A673 (cell line): ENCODE measurements at regions of chr15 and their contacts with region 1.

Region 1: GRCh38 chr15:83248151-83249029 is 36.1 kb downstream of the BNC1 start:
- DNase-seq: peak; percentile 73
- H3K4me3 ChIP-seq: no peak overlapping the region
- H3K27ac ChIP-seq: no peak overlapping the region
- H3K4me1 ChIP-seq: no peaks in the 10 kb centered on the region
- H3K27me3 ChIP-seq: peaks cover 6% of the 10 kb centered on the region
- CTCF ChIP-seq: peak; percentile 90

Region 2: GRCh38 chr15:83039206-83039605 is 209.2 kb before region 1 on chr15:
- CTCF ChIA-PET with region 1: no interaction called
- POLR2A ChIA-PET with region 1: no interaction called
- intact Hi-C with region 1: no loop called
- DNase-seq: no peak
- H3K4me3 ChIP-seq: no peak overlapping the region
- H3K27ac ChIP-seq: no peak overlapping the region
- H3K4me1 ChIP-seq: no peaks in the 10 kb centered on the region
- H3K27me3 ChIP-seq: no peaks in the 10 kb centered on the region
- CTCF ChIP-seq: no peak

Region 3: DNA sequence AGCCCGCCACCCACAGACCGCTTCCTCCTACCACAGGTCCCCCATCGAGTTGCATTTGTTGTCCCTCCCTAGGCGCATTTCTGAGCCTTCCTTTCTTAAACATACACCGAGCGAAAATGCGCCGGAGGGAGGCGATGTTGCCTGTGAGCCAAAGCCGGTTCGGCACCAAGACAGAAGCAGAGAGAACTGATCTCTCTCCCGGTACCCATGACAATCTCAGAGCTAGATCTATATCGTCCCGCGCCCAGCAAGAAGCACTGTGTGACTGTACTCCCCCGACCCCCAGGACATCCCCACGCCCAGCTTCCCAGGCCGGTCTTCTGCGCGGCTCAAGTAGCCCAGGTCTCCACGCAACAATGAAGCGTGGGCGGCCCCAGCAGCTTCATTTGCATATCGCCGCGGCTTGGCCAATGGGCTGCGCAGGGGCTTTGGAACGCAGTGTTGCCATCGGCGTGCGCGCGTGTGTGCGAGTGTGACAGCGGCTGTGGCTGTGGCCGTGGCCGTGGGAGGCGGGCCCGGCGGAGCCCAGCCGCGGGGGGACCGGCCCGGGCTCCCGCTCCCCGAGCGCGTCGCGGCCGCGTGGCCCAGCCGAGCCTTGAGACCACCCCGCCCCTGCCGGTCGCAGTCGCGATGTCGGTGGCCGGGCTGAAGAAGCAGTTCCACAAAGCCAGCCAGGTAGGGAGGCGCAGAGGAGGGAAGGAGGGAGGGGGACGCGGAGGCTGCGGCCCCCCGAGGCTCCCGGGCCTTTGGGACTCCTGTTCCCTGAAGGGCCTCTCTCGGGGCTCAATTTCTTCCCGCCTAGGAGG is 198.7 kb after region 1 on chr15 and contains the start of gene SH3GL3:
- CTCF ChIA-PET with region 1: interaction called, 13 read pairs
- POLR2A ChIA-PET with region 1: no interaction called
- intact Hi-C with region 1: no loop called
- DNase-seq: peak; percentile 93
- H3K4me3 ChIP-seq: peak within 1 kb of the TSS; percentile 63
- H3K27ac ChIP-seq: peak within 1 kb of the TSS; percentile 54
- H3K4me1 ChIP-seq: peaks cover 4% of the 10 kb centered on the region
- H3K27me3 ChIP-seq: no peaks in the 10 kb centered on the region
- CTCF ChIP-seq: peak; percentile 73
- total RNA-seq, gene SH3GL3: 25.6 and 32.1 TPM in 2 replicates

Region 4: GRCh38 chr15:83559310-83559966 is 311.0 kb after region 1 on chr15:
- CTCF ChIA-PET with region 1: interaction called, 4 read pairs
- POLR2A ChIA-PET with region 1: no interaction called
- intact Hi-C with region 1: loop called (anchors 2 kb)
- DNase-seq: peak; percentile 85
- H3K4me3 ChIP-seq: no peak overlapping the region
- H3K27ac ChIP-seq: no peak overlapping the region
- H3K4me1 ChIP-seq: no peaks in the 10 kb centered on the region
- H3K27me3 ChIP-seq: no peaks in the 10 kb centered on the region
- CTCF ChIP-seq: peak; percentile 86

Region 5: DNA sequence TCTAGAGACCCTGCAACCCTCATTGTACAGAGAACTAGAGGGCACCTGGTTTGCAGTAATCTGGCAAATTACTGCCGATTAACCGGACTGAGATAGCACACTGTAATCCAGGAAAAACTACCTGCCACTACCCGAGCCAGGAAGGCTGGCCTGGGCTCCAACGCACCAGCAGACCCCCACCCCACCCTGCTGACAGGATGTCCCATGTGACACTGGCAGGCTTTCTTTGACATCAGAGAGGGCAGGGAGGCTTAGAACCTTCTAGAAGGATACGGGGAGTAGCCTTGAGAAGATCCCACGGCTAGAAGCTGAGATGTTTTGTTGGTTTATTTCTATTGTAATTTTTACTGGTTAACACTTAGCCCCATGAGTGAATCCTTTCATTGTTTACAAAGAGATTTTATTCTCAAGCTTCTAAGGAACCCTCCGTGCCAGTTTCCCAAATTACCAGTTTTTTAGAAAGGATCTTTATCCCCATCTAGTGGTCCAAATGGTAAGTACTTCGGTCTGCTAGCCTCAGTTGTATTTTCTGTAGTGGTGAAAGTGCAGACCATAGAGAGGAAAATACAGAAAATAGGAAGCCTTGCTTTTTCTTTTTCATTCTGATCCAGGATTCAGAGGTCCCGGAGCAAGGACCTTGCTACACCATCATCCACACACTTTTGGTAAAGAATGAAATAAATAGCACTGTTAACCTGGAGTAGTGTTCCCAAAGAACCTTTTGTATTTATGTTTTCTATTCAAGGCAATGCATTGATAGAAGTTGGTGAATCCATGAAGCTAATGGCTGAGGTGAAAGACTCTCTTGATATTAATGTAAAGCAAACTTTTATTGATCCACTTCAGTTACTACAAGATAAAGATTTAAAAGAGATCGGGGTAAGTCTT is 323.7 kb after region 1 on chr15:
- CTCF ChIA-PET with region 1: no interaction called
- POLR2A ChIA-PET with region 1: no interaction called
- intact Hi-C with region 1: loop called (anchors 5 kb)
- DNase-seq: peak; percentile 65
- H3K4me3 ChIP-seq: no peak overlapping the region
- H3K27ac ChIP-seq: no peak overlapping the region
- H3K4me1 ChIP-seq: no peaks in the 10 kb centered on the region
- H3K27me3 ChIP-seq: no peaks in the 10 kb centered on the region
- CTCF ChIP-seq: peak; percentile 70

Region 6: GRCh38 chr15:84023636-84024035 is 775.2 kb after region 1 on chr15:
- CTCF ChIA-PET with region 1: no interaction called
- POLR2A ChIA-PET with region 1: no interaction called
- intact Hi-C with region 1: loop called (anchors 10 kb)
- DNase-seq: peak; percentile 75
- H3K4me3 ChIP-seq: no peak overlapping the region
- H3K27ac ChIP-seq: no peak overlapping the region
- H3K4me1 ChIP-seq: no peaks in the 10 kb centered on the region
- H3K27me3 ChIP-seq: peaks cover 3% of the 10 kb centered on the region
- CTCF ChIP-seq: peak; percentile 75